Activated T-helper 1 cell treated with anti-CD3 and anti-CD28 coated beads, Interleukin-12 subunit alpha, Interleukin-12 subunit beta, Interleukin-2, Interleukin-4 antibody, amounts not matched to agents 30 ng/mL and 10 ng/mL and 1 ng/mL, durations not matched to agents 14 hours and 24 hours and 36 hours (primary cell): ENCODE measurements at regions of chr16 and their contacts with region 1.

Region 1: DNA sequence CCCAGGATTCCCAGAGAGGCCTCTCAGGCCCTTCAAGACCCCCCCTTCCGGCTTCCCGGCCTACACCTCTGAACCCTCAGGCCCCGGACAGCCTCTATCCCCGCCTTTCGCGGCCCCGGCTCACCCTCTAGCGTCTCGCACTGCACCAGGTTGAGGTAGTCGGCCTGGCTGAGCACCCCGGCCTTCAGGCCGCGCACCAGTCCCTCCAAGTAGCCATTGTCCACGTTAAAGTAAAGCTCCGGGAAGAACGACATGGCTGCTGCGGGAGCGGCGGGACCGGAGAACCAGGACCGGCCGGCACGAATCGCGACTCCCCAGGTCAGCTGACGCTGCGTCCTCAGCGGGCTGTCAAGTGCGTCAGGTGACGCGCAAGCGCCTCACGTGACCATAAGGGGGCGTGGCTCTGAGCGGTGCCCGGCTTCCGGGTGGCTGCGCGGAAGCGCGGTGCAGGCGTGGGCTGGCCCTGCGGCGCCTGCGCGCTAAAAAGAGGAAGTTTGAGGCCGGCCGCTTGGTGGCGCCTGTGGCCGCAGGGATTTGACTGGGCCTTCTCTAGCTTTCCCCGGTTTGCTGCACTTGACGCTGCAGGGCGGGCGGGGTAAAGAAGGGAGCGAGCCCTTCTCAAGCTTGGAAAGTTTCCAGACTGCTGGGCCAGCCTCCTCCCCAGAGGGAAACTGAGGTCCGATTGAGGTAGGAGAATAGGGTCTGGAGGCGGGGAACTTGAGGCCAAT is at the start of gene ATP6V0D1:
- DNase-seq: peak; percentile 99
- H3K4me3 Mint-ChIP-seq: peak within 1 kb of the TSS; percentile 89
- H3K27ac Mint-ChIP-seq: peak within 1 kb of the TSS; percentile 97
- H3K4me1 Mint-ChIP-seq: peaks cover 17% of the 10 kb centered on the region
- H3K27me3 Mint-ChIP-seq: no peaks in the 10 kb centered on the region
- total RNA-seq, gene ATP6V0D1: 37.7 and 41.5 TPM in 2 replicates

Region 2: DNA sequence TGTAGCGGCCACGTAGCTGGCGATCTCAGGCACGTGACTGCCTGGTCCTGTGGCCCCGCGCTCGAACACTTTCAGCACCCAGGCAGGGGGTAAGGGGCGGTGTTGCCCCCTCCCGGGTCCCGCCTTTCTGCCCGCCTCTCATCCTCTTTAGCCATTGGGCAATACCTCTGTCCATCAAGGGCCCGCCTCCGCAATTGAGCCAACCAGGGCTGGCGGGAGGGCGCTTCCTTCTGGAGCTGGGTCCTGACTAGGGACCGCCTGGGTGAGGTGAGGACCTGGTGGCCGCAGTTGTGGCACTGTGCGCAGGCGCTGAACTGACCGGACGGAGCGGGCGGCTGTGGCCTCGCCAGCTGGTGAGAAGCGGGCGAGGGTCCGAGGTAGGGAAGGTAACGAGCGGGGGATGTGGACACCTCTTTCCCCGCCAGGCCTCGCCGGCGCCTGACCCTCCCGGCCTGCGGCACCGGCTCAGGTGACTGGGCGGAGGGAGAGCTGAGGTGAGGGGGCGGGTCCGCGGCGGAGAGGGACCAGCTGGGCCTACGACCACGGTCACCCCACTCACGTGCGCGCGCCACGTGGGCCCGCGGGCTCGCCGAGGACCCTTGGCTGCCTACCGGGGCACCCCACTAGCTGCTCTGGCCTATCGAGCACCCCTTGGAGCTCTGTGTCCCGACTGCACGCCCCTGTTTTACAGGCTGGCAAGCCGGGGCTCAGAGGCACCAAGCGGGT is 600.5 kb before region 1 on chr16 and contains the start of gene PDP2:
- intact Hi-C with region 1: loop called (anchors 1 kb)
- DNase-seq: peak; percentile 92
- H3K4me3 Mint-ChIP-seq: peak within 1 kb of the TSS; percentile 98
- H3K27ac Mint-ChIP-seq: peak within 1 kb of the TSS; percentile 95
- H3K4me1 Mint-ChIP-seq: peaks cover 51% of the 10 kb centered on the region
- H3K27me3 Mint-ChIP-seq: no peaks in the 10 kb centered on the region
- total RNA-seq, gene PDP2: 43.3 and 52.2 TPM in 2 replicates

Region 3: GRCh38 chr16:67279296-67280089 is 201.5 kb before region 1 on chr16 and contains the start of gene PLEKHG4:
- intact Hi-C with region 1: loop called (anchors 1 kb)
- DNase-seq: peak; percentile 80
- H3K4me3 Mint-ChIP-seq: peak within 1 kb of the TSS; percentile 88
- H3K27ac Mint-ChIP-seq: peak within 1 kb of the TSS; percentile 86
- H3K4me1 Mint-ChIP-seq: peaks cover 30% of the 10 kb centered on the region
- H3K27me3 Mint-ChIP-seq: no peaks in the 10 kb centered on the region
- total RNA-seq, gene PLEKHG4: 39.6 and 42.3 TPM in 2 replicates

Region 4: DNA sequence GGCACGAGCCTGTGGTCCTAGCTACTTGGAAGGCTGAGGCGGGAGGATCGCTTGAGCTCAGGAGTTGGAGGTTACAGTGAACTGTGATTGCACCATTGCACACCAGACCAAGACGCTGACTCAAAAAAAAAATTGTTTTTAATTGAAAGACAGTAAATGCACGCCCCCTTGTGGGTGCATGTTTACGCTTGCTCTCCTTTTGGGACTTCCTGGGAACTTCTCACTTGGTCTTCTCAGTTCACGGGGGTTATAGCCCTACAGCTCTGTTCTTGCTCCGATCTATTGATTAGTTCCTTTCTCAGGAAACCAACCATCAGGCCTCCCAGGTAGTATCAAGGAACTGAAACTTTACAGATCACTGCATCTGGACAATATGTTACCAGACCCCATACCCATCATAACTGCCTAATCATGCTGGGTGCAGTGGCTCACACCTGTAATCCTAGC is 33.4 kb after region 1 on chr16:
- intact Hi-C with region 1: loop called (anchors 1 kb)
- DNase-seq: peak; percentile 69
- H3K4me3 Mint-ChIP-seq: no peak overlapping the region
- H3K27ac Mint-ChIP-seq: no peak overlapping the region
- H3K4me1 Mint-ChIP-seq: peaks cover 5% of the 10 kb centered on the region
- H3K27me3 Mint-ChIP-seq: peaks cover 2% of the 10 kb centered on the region

Region 5: GRCh38 chr16:67660564-67661028 is 179.6 kb after region 1 on chr16 and contains the start of gene PARD6A:
- intact Hi-C with region 1: loop called (anchors 1 kb)
- DNase-seq: peak; percentile 96
- H3K4me3 Mint-ChIP-seq: peak within 1 kb of the TSS; percentile 92
- H3K27ac Mint-ChIP-seq: peak within 1 kb of the TSS; percentile 97
- H3K4me1 Mint-ChIP-seq: peaks cover 20% of the 10 kb centered on the region
- H3K27me3 Mint-ChIP-seq: no peaks in the 10 kb centered on the region
- total RNA-seq, gene PARD6A: 13.4 and 16.1 TPM in 2 replicates

Region 6: GRCh38 chr16:67685388-67686112 is 204.6 kb after region 1 on chr16:
- intact Hi-C with region 1: no loop called
- DNase-seq: no peak
- H3K4me3 Mint-ChIP-seq: no peak overlapping the region
- H3K27ac Mint-ChIP-seq: no peak overlapping the region
- H3K4me1 Mint-ChIP-seq: peaks cover 5% of the 10 kb centered on the region
- H3K27me3 Mint-ChIP-seq: no peaks in the 10 kb centered on the region

Region 7: GRCh38 chr16:67806428-67807147 is 325.6 kb after region 1 on chr16 and contains the starts of genes RANBP10 and TSNAXIP1:
- intact Hi-C with region 1: loop called (anchors 1 kb)
- DNase-seq: peak; percentile 96
- H3K4me3 Mint-ChIP-seq: peak within 1 kb of the TSS; percentile 90
- H3K27ac Mint-ChIP-seq: peak within 1 kb of the TSS; percentile 86
- H3K4me1 Mint-ChIP-seq: peaks cover 35% of the 10 kb centered on the region
- H3K27me3 Mint-ChIP-seq: peaks cover 3% of the 10 kb centered on the region
- total RNA-seq, gene RANBP10: 23.0 and 25.7 TPM in 2 replicates
- total RNA-seq, gene TSNAXIP1: 0.52 and 0.83 TPM in 2 replicates